ENCODE measurements at regions of chr12 and their contacts with region 1.

Region 1: GRCh38 chr12:59808317-59808910 is 212.6 kb downstream of the SLC16A7 start:
- DNase-seq: peak; percentile 49
- CTCF ChIP-seq: peak; percentile 68

Region 2: GRCh38 chr12:59403259-59403932 is 405.0 kb before region 1 on chr12:
- in situ Hi-C with region 1: loop called (anchors 25 kb)
- DNase-seq: peak; percentile 6
- CTCF ChIP-seq: peak; percentile 79

Region 3: GRCh38 chr12:59595883-59596540 is 212.4 kb before region 1 on chr12 and contains the start of gene SLC16A7:
- in situ Hi-C with region 1: loop called (anchors 25 kb)
- DNase-seq: peak; percentile 79
- CTCF ChIP-seq: no peak

Measured in GM13976 (cell line).